ENCODE measurements at regions of chr12 and their contacts with region 1.

Region 1: DNA sequence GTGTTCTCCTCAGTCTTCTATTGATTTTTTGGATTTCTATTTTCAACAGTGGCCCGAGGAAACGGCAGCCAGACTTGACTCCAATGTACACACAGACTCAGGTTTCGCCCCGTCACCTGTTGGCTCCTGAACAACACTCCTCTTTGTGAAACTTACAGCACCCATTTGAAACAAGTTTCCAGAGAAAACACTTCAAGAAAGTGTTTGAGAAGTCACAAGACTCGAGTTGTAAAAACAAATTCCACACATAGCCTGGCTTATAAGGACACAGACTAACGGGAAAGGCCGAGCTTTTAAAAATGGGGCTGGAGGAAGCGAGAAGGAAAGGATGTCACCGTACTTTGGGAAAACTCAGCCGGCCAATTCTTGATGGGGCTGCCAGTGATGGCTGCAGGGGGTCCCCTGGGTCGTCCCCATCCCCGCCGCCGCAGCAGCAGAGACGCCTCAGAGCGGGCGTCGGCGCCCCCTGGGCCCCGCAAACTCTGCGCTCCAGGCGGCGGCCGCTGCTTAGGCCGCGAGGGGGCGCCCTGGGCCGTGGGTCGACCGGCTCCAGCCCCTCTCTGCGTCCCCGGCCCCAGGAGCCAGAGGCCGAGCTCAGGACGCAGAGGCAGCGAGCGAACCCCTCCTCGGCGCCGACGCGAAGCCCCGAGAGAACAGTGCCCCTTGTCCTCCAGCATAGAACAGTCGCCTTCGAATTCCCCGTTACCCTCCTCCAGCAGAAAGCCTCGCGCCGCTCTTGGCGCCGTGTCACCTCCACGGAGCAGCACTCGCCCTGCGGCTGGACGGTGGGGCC is 106.9 kb downstream of the PRICKLE1 start:
- DNase-seq: peak; percentile 24
- ATAC-seq: peak; percentile 97
- H3K4me3 ChIP-seq: peak overlapping the region; percentile 41 to 88 (median 43); a peak in 5 of 6 replicates
- H3K27ac ChIP-seq: no peak overlapping the region
- H3K4me1 ChIP-seq: peaks cover 7% of the 10 kb centered on the region
- H3K27me3 ChIP-seq: peaks cover 0 to 42% of the 10 kb centered on the region in 2 experiments; a peak in 4 of 5 replicates
- CTCF ChIP-seq: peak; percentile 85
- EP300 ChIP-seq: no peak
- POLR2A ChIP-seq: no peak
- RAD21 ChIP-seq: peak; percentile 89

Region 2: DNA sequence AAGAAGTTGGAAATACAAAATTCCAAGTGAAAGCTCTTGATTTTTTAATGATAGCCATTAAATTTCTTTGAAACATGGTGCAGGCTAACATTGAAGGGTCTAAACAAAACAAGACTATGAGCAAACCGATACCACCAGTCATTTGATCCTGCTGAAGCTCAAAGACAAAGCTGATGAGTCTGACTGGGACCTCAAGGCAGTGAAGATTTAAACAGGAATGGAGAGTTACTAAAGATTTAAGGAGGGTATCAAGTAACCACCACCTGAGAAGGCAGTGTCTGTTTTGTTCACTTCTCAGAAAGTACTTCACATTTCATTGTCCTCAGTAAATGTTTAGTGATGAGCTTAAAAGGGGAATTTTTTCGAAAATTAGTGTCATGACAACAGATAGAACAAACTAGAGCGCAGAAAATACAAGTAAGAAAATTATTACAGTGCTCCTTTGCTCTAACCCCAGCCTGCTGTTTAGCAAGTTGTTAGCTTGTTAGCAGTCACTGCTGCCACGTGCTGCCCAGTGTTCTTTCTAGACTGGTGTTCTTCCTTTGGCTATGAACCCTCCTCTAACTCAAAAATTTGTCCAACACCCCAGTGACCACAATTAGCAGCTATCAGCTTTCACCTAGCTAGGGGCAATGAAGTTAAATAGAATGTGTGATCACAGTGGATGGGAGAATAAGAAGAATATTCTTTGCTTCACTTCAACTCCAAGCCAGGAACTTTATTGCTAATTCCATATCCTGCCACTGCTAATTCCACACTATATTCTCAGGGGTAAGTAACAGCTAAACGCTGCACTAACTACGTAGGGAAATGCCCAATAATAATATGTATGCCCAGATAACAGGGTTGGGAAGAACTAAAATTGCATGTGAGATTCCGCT is 285.7 kb before region 1 on chr12:
- CTCF ChIA-PET with region 1: no interaction called
- POLR2A ChIA-PET with region 1: no interaction called
- in situ Hi-C with region 1: no loop called
- intact Hi-C with region 1: no loop called
- DNase-seq: no peak
- ATAC-seq: no peak
- H3K4me3 ChIP-seq: no peak overlapping the region
- H3K27ac ChIP-seq: no peak overlapping the region
- H3K4me1 ChIP-seq: no peaks in the 10 kb centered on the region
- H3K27me3 ChIP-seq: no peaks in the 10 kb centered on the region
- CTCF ChIP-seq: no peak
- EP300 ChIP-seq: no peak
- POLR2A ChIP-seq: no peak
- RAD21 ChIP-seq: no peak

Region 3: DNA sequence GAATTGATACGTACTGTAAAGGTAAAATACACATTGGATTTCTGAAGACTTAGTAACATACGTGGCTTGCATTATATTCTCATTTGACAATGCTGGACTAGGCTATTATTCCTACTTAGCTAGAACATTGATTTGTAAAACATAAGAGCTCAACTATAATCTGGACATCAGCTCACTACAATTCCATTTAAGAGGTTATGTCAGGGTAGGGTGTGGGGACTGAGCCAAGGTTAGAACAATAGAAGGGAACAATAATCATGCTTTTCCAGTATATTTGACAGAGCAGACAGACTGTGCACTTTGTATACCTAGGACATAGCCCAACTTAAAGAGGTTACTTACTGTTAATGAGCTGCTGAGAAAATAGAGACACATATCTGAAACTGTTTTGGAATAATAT is 167.5 kb before region 1 on chr12:
- CTCF ChIA-PET with region 1: no interaction called
- POLR2A ChIA-PET with region 1: no interaction called
- in situ Hi-C with region 1: no loop called
- intact Hi-C with region 1: no loop called
- DNase-seq: no peak
- ATAC-seq: no peak
- H3K4me3 ChIP-seq: no peak overlapping the region
- H3K27ac ChIP-seq: no peak overlapping the region
- H3K4me1 ChIP-seq: no peaks in the 10 kb centered on the region
- H3K27me3 ChIP-seq: no peaks in the 10 kb centered on the region
- CTCF ChIP-seq: no peak
- EP300 ChIP-seq: no peak
- POLR2A ChIP-seq: no peak
- RAD21 ChIP-seq: no peak

Region 4: GRCh38 chr12:42568952-42569915 is 86.6 kb after region 1 on chr12:
- CTCF ChIA-PET with region 1: interaction called, 22 read pairs
- POLR2A ChIA-PET with region 1: no interaction called
- in situ Hi-C with region 1: loop called (anchors 5 kb)
- intact Hi-C with region 1: loop called (anchors 1 kb)
- DNase-seq: peak; percentile 30
- ATAC-seq: peak; percentile 63
- H3K4me3 ChIP-seq: no peak overlapping the region
- H3K27ac ChIP-seq: no peak overlapping the region
- H3K4me1 ChIP-seq: no peaks in the 10 kb centered on the region
- H3K27me3 ChIP-seq: peaks cover 0 to 7% of the 10 kb centered on the region in 2 experiments; a peak in 2 of 5 replicates
- CTCF ChIP-seq: peak; percentile 60
- EP300 ChIP-seq: no peak
- POLR2A ChIP-seq: no peak
- RAD21 ChIP-seq: no peak

Region 5: DNA sequence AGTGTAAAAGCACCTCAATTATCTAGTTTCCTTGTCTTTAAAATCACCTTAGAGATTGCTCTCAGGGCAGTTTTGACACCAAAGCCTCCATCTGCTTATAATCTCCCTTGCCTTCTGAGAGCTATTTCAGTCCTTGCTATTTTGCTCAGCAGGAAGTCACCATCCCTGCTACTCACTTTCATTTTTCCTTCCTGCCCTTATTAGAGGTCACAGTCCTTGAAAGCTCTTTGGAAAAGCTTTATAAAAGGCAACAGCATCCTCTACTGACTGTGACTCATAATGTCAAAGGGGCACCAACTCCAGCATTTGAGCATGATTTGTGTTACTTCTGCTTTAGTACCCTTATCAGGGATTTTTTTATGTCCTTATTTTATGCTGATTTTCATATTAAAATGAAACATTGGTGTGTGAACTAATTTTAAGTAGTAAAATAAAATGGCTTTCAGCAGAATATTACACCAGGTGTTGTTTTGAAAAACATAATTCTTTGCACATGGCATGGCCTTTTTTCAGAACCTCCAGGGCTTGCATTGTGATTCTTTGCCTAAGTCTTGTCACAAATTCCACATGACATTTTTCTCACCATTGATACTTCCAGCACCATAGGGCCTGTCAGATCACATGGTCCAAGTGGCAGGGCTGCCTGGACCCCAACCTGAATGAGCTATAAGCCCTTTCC is 856.3 kb after region 1 on chr12:
- CTCF ChIA-PET with region 1: no interaction called
- POLR2A ChIA-PET with region 1: no interaction called
- in situ Hi-C with region 1: loop called (anchors 25 kb)
- intact Hi-C with region 1: loop called (anchors 2 kb)
- DNase-seq: peak; percentile 2
- ATAC-seq: peak; percentile 67
- H3K4me3 ChIP-seq: no peak overlapping the region
- H3K27ac ChIP-seq: no peak overlapping the region
- H3K4me1 ChIP-seq: no peaks in the 10 kb centered on the region
- H3K27me3 ChIP-seq: no peaks in the 10 kb centered on the region
- CTCF ChIP-seq: peak; percentile 55
- EP300 ChIP-seq: no peak
- POLR2A ChIP-seq: no peak
- RAD21 ChIP-seq: no peak

Measured in HepG2 (cell line).